PC-3 (cell line): ENCODE measurements at regions of chr21 and their contacts with region 1.

Region 1: DNA sequence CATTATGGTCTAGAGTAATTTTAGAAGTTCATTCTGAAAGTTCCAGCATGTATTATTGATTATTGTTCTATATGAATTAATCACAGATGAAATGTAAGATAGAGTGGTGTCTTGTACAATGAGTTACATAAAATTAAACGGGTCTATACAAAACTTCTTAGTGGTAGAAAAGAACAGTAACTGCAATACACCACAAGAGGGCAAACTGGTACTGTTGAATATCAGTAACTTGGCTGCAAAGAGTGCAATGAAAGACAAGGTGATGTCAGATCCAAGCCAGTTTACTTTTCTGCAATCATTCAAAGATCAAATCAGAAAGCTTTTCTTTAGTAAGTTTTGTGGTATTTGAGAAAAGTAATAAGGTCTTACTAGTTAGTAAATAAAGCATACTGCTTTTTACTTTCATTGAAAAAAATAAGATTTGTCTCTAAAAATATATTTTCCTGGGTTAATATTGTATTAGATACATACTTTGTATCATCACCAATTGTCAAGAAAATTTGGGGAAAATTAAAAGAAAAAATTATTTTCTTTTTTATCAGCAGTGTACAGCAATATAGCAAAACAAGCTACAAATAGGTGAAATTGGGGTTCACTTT is 66.4 kb upstream of the BTG3 start:
- DNase-seq: peak; percentile 77
- ATAC-seq: peak; percentile 79
- H3K4me3 ChIP-seq: no peak overlapping the region
- H3K27ac ChIP-seq: no peak overlapping the region
- H3K4me1 ChIP-seq: no peaks in the 10 kb centered on the region
- H3K27me3 ChIP-seq: peaks cover 5% of the 10 kb centered on the region; the same call in 1 of the 2 replicates
- CTCF ChIP-seq: peak; percentile 92

Region 2: GRCh38 chr21:17387030-17387617 is 292.0 kb before region 1 on chr21:
- CTCF ChIA-PET with region 1: no interaction called
- POLR2A ChIA-PET with region 1: no interaction called
- intact Hi-C with region 1: loop called (anchors 5 kb)
- DNase-seq: peak; percentile 84
- ATAC-seq: peak; percentile 59
- H3K4me3 ChIP-seq: no peak overlapping the region
- H3K27ac ChIP-seq: no peak overlapping the region
- H3K4me1 ChIP-seq: peaks cover 5% of the 10 kb centered on the region
- H3K27me3 ChIP-seq: no peaks in the 10 kb centered on the region
- CTCF ChIP-seq: peak; percentile 90

Region 3: DNA sequence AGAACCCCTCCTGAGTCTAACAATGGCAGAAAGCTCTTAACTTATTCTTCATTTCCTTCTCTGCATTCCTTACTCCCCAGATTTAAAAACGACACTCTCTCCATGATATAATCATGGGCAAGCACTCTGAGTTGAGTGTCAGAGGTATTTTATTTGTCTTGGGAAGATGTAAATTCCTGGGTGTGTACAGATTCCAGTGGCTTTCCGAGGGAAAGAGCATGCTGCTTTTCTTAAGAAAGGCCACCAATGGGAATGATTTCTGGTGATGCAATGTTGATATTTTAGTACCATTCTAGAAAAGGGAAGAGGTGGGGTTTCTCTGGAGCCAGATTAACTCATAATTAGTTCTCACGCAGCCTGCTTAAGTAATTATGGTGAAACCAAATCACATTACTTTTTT is 18.7 kb before region 1 on chr21:
- CTCF ChIA-PET with region 1: no interaction called
- POLR2A ChIA-PET with region 1: no interaction called
- intact Hi-C with region 1: no loop called
- DNase-seq: peak; percentile 44
- ATAC-seq: no peak
- H3K4me3 ChIP-seq: no peak overlapping the region
- H3K27ac ChIP-seq: no peak overlapping the region
- H3K4me1 ChIP-seq: no peaks in the 10 kb centered on the region
- H3K27me3 ChIP-seq: 0 out of 2 replicates have a peak, but pooled peaks cover 5% of the 10 kb centered on the region
- CTCF ChIP-seq: no peak

Region 4: DNA sequence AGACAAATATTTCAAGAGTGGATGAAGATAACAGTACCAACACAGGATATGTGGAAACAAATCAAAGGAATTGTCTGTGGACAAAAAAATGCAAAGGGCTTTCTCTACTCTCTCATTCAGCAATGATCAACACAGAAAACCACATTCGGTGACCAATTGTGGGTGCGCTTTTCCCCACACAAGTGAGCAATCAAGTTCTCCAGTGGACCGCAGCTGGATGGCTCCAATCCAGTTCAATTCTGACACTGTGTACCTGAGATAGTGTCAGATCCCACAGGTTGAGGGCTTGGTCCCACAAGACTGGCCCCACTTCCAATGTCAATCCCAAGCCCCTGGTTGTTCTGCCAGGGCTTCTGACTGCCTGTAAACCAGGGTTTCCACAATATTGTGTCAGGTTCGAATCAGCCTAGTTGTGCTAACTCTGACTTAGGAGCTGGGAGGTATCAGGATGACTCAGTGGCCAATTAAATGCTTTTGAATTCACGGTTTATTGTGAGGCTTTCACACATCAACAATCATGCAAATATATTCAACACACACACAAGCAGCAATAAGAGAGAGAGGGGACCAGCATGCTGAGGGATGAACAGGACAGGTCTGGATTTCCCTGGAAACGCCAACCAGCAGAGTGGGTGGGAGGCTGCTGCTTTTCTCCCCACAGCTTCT is 20.6 kb after region 1 on chr21:
- CTCF ChIA-PET with region 1: no interaction called
- POLR2A ChIA-PET with region 1: no interaction called
- intact Hi-C with region 1: no loop called
- DNase-seq: no peak
- ATAC-seq: no peak
- H3K4me3 ChIP-seq: no peak overlapping the region
- H3K27ac ChIP-seq: no peak overlapping the region
- H3K4me1 ChIP-seq: no peaks in the 10 kb centered on the region
- H3K27me3 ChIP-seq: no peaks in the 10 kb centered on the region
- CTCF ChIP-seq: no peak

Region 5: DNA sequence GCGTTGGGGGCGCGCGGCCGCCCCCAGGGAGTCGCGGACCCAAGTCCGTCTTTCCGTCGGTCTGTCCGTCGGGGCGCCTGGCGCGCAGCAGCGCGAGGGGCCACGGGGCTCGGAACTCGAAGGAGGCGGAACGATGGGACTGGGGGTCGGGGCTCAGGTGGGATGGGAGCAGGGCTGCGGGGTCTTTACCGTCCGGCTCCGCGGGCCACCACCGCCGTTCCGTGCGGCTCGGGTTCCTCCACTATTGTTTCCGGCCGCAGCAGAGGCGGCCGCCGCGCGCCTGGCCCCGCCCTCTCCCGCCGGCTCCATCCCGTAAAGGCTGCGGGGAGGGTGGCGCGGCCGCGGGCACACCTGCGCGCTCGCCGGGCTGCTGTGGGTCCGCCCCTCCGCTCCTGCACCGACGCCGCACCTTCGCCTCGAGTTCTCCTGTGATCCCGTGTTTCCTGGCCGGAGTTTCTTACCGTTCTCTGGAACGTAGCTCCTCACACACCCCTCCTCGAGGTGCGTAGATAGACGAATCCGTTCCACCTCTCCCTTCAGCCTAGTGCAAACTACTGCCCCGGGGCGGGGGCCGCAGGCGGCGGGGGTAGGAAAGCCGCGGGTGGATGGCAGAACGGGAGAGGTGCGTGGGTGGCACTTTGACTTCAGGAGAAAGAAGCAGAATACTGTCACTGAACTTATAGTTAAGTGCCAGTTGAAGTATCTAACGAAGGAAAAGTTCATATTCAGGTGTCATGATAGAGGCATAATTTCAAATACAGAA is 140.2 kb after region 1 on chr21 and contains the start of gene C21orf91:
- CTCF ChIA-PET with region 1: no interaction called
- POLR2A ChIA-PET with region 1: no interaction called
- intact Hi-C with region 1: loop called (anchors 10 kb)
- DNase-seq: peak; percentile 88
- ATAC-seq: peak; percentile 88
- H3K4me3 ChIP-seq: peak within 1 kb of the TSS; percentile 86
- H3K27ac ChIP-seq: peak within 1 kb of the TSS; percentile 63
- H3K4me1 ChIP-seq: peaks cover 17% of the 10 kb centered on the region
- H3K27me3 ChIP-seq: no peaks in the 10 kb centered on the region
- CTCF ChIP-seq: no peak
- total RNA-seq, gene C21orf91: 6.1 and 7.7 TPM in 2 replicates

Region 6: DNA sequence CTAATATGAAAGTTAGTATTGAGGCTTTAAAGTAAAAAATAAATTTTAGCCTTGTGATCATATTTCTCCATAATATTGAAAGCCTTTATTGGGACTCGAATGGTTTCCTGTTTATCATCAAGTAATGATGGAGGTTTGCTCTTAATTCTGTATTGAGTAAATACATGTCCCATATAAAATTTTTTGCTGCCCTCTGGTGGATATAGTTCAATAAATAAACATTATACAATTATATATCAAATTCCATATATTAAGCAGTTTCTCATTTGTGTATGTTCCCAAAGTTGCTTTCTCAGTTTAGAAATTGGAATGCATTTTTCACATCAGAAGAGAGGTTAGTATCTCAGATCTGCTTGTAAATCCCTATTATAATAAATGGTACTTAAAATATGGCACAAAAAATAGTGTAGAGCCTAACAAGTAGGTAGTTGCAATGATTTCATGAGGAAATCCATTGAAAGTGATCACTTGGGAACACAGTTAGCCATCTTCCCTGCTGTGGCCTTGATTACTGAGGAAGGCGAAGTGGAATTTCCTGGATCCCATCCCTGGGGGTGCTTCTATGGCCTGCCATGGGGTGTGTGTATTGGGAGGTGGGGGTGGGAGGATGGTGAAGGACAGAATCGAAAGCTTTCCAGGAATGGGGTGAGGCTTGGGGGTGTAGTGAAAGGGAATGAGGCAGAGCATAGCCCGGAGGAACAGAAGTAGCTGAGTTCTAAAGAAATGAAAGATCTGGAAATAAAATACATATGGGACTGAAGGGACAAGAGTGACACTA is 224.1 kb after region 1 on chr21:
- CTCF ChIA-PET with region 1: no interaction called
- POLR2A ChIA-PET with region 1: no interaction called
- intact Hi-C with region 1: loop called (anchors 1 kb)
- DNase-seq: peak; percentile 73
- ATAC-seq: peak; percentile 49; the same call in 1 of the 2 replicates
- H3K4me3 ChIP-seq: no peak overlapping the region
- H3K27ac ChIP-seq: no peak overlapping the region
- H3K4me1 ChIP-seq: peaks cover 6% of the 10 kb centered on the region
- H3K27me3 ChIP-seq: no peaks in the 10 kb centered on the region
- CTCF ChIP-seq: 0 out of 2 replicates have a peak, but pooled peaks have one; percentile 49

Region 7: DNA sequence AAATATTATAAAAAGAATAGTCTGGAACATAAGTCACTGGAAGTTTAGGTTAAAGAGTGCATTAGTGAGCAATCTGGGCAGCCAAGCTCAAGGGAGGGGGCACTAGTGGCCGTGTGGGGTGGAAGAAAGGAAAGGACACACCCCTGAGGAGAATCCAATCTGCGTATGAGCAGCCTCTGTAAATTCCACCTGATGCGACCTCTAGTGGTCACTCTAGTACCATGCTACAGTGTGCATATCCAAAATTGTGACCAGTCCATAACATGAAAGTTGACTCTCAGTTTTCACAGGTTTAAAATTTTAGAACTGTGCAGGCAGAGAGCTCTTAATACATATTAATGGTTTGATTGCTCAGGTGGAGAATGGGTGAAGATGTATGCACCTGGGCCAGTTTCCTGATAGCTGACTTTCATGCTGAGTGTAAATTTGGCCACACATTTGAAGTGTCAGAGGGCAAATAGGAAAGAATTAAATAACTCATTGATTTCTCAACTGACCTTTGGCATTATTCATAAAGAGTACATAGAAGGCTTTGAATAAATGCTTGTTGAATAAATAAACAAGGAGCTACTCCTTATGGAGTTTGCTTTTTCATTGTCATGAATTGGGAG is 246.0 kb after region 1 on chr21:
- CTCF ChIA-PET with region 1: no interaction called
- POLR2A ChIA-PET with region 1: no interaction called
- intact Hi-C with region 1: loop called (anchors 1 kb)
- DNase-seq: peak; percentile 83
- ATAC-seq: peak; percentile 96
- H3K4me3 ChIP-seq: no peak overlapping the region
- H3K27ac ChIP-seq: no peak overlapping the region
- H3K4me1 ChIP-seq: peaks cover 6% of the 10 kb centered on the region; the same call in 1 of the 2 replicates
- H3K27me3 ChIP-seq: no peaks in the 10 kb centered on the region
- CTCF ChIP-seq: peak; percentile 94